Lower leg skin (tissue), 4 donors: ENCODE measurements at regions of chr5 and their contacts with region 1.

Region 1: GRCh38 chr5:20307391-20307790 is 319.4 kb upstream of the CDH18 start:
- DNase-seq: no peak
- H3K4me3 ChIP-seq: no peak overlapping the region
- CTCF ChIP-seq: no peak
- POLR2A ChIP-seq: no peak

Region 2: GRCh38 chr5:19950897-19951296 is 356.5 kb before region 1 on chr5:
- intact Hi-C with region 1: no loop called
- DNase-seq: no peak
- H3K4me3 ChIP-seq: no peak overlapping the region
- CTCF ChIP-seq: no peak
- POLR2A ChIP-seq: no peak

Region 3: GRCh38 chr5:20231040-20231439 is 76.4 kb before region 1 on chr5:
- intact Hi-C with region 1: no loop called
- DNase-seq: no peak
- H3K4me3 ChIP-seq: no peak overlapping the region
- CTCF ChIP-seq: no peak
- POLR2A ChIP-seq: no peak

Region 4: GRCh38 chr5:20335980-20336379 is 28.6 kb after region 1 on chr5:
- intact Hi-C with region 1: no loop called
- DNase-seq: no peak
- H3K4me3 ChIP-seq: no peak overlapping the region
- CTCF ChIP-seq: no peak
- POLR2A ChIP-seq: no peak

Region 5: GRCh38 chr5:20360263-20360662 is 52.9 kb after region 1 on chr5:
- intact Hi-C with region 1: loop called (anchors 2 kb)
- DNase-seq: no peak
- H3K4me3 ChIP-seq: no peak overlapping the region
- CTCF ChIP-seq: no peak
- POLR2A ChIP-seq: no peak